GM18951 (cell line): ENCODE measurements at regions of chr5 and their contacts with region 1.

Region 1: GRCh38 chr5:54944364-54944763 is 41.0 kb downstream of the ESM1 start:
- POLR2A ChIP-seq: no peak

Region 2: DNA sequence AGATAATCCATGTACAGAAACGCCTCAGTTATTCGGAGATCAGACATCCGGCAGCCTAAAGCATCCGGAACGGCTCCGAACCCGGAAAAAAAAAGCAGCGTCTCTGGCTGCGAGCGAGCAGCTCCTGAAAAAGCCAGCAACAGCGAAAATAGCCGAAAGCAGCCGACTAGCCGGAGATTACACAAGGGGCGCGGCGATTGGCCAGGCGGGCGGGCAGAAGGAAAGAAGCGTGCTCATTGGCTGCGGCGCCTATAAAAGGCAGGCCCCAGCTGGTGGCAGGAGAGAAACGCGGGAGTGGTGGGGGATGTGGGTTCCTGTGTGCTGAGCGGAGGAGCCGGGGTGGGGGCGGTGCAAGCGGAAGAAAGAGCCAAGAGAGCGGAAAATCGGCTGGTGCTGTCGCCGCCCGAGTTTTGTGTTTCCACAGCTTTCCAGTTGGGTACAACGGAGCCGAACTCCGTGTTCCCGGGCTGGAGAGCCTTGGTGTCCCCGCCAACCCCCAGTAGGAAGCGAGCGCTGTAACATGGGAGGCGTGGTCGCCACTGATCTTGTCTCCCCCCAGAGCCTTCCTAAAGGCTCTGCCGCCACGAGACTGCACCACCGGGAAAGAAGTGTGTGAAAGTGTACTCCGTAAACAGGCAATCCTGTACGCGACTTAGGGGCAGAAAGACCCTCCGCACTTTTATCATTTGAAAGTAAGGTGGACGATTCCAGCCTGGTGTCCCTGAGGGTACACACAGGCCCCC is 633.8 kb before region 1 on chr5 and contains the start of gene ARL15:
- in situ Hi-C with region 1: no loop called
- POLR2A ChIP-seq: peak; percentile 98

Region 3: DNA sequence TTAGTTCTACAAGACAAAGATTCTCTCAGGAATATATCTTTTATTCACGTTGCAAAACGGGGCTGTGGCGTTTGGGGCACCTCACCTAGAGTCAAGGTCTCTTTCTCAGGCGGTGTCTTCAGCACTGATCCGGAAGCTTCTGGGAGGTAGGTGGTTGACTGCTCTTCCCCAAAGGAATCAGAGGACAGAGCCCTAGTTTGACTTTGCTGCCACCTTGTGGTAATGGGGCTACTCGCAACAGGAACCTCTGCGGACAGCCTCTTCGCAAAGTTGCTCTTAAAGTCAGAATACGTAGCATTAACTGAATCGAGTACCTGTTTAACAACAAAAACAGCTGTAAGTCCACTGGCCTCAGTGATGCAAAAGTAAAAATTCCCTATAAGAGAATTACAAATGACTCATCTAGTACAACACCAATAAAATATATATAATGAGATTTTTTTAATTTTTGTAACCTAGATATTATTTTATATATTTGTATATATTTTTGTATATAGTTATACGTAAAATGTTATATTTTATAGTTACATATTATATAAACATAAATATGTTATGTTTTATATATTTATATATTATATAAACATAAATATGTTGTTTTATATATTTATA is 202.3 kb after region 1 on chr5:
- in situ Hi-C with region 1: loop called (anchors 25 kb)
- POLR2A ChIP-seq: no peak